Activated CD4-positive, alpha-beta T cell treated with anti-CD3 and anti-CD28 coated beads, Interleukin-2, amount 10 ng/mL, durations not matched to agents 24 days and 14 days (primary cell): ENCODE measurements at regions of chr5 and their contacts with region 1.

Region 1: GRCh38 chr5:79990598-79991507 is at the start of gene MTX3:
- DNase-seq: peak; percentile 96
- H3K4me3 Mint-ChIP-seq: peak within 1 kb of the TSS; percentile 94
- H3K27ac Mint-ChIP-seq: peak within 1 kb of the TSS; percentile 99
- H3K4me1 Mint-ChIP-seq: peaks cover 34% of the 10 kb centered on the region
- H3K27me3 Mint-ChIP-seq: peaks cover 3% of the 10 kb centered on the region
- total RNA-seq, gene MTX3: 26.8 and 27.8 TPM in 2 replicates

Region 2: GRCh38 chr5:79514391-79515105 is 476.3 kb before region 1 on chr5:
- intact Hi-C with region 1: loop called (anchors 2 kb)
- DNase-seq: peak; percentile 97
- H3K4me3 Mint-ChIP-seq: peak overlapping the region; percentile 88
- H3K27ac Mint-ChIP-seq: peak overlapping the region; percentile 97
- H3K4me1 Mint-ChIP-seq: peaks cover 32% of the 10 kb centered on the region
- H3K27me3 Mint-ChIP-seq: peaks cover 23% of the 10 kb centered on the region

Region 3: DNA sequence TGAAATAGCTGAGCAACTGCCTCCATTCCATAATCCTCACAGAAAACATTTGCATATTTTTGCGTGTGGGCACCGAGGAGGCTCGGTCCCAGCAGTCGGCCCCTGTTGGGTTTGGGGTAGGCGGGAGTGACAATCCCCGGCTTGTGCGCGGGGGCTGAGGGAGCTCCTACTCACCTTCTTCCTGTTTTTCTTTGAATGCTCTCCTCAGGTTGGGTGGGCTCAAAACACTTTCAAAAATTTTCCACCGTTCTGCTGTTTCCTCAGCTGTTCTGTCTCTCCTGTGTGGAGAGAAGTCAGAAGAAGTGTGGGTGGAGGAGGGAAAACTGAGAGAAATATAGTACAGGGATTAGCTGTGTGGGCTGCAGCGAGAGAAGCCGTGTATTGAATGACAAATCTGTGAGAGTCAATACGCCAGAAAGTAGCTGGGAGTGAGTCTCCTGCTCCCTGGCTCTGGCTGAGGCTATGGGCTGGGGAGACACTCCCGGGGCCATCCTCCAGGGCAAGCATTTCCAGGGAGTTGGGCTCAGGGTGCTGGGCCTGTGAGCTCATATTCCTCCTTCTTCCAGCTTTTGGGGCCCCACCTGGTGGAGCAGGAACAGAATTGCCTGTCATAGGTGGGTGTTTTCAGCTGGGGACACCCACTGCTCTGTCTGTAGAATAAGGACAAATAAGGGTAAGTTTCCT is 216.5 kb before region 1 on chr5:
- intact Hi-C with region 1: no loop called
- DNase-seq: no peak
- H3K4me3 Mint-ChIP-seq: no peak overlapping the region
- H3K27ac Mint-ChIP-seq: no peak overlapping the region
- H3K4me1 Mint-ChIP-seq: no peaks in the 10 kb centered on the region
- H3K27me3 Mint-ChIP-seq: peaks cover 1% of the 10 kb centered on the region

Region 4: DNA sequence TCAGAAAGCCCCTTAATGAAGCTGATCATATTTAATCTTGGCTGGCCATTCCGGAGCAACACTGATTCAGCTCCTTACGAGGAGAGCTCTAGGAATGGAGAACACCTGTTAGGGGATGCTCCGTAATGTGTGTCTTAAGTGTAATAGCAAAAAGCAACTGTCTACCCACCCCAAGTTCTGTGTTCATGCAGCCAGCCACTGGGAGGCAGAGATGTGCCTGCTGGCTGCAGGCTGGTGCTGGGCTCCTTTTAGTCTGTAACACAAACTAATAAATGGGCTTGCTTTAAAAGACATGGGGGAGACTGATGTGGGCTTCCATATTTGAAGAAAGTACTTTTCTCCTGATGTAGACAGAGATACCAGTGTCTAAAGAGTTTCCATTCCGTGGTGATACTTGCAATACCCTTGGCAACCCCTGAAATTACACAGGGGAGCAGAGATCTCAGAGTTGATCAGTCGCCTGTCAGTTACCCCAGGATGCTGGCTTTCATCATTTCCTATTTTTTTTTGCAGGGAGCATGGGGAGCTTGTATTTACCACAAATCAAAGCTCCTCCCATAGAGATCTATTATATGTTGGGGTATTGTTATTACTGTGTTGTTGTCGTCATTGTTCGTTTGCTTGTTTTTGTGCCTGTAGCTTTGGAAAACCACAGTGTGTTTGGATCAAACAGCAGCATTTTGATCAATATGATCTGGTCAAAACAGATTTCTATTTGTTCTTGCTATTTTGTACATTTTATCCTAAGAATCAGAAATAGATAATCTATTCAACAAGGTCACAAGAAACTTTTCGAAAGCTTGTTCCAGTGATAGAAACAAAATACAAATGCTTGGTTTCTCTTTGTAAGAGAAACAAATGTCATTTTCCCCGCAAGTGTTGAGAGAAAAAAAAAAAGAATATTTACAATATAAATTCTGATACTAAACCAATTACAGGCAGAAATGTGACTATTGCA is 65.6 kb before region 1 on chr5:
- intact Hi-C with region 1: loop called (anchors 5 kb)
- DNase-seq: peak; percentile 70
- H3K4me3 Mint-ChIP-seq: no peak overlapping the region
- H3K27ac Mint-ChIP-seq: no peak overlapping the region
- H3K4me1 Mint-ChIP-seq: no peaks in the 10 kb centered on the region
- H3K27me3 Mint-ChIP-seq: peaks cover 10% of the 10 kb centered on the region

Region 5: GRCh38 chr5:80033513-80033912 is 42.7 kb after region 1 on chr5:
- intact Hi-C with region 1: loop called (anchors 1 kb)
- DNase-seq: peak; percentile 78
- H3K4me3 Mint-ChIP-seq: no peak overlapping the region
- H3K27ac Mint-ChIP-seq: no peak overlapping the region
- H3K4me1 Mint-ChIP-seq: peaks cover 25% of the 10 kb centered on the region
- H3K27me3 Mint-ChIP-seq: peaks cover 52% of the 10 kb centered on the region

Region 6: GRCh38 chr5:80125962-80126480 is 135.2 kb after region 1 on chr5:
- intact Hi-C with region 1: loop called (anchors 1 kb)
- DNase-seq: peak; percentile 78
- H3K4me3 Mint-ChIP-seq: peak overlapping the region; percentile 26
- H3K27ac Mint-ChIP-seq: peak overlapping the region; percentile 70
- H3K4me1 Mint-ChIP-seq: peaks cover 28% of the 10 kb centered on the region
- H3K27me3 Mint-ChIP-seq: no peaks in the 10 kb centered on the region

Region 7: GRCh38 chr5:80255732-80256479 is 265.1 kb after region 1 on chr5 and contains the start of gene SERINC5:
- intact Hi-C with region 1: loop called (anchors 5 kb)
- DNase-seq: peak; percentile 95
- H3K4me3 Mint-ChIP-seq: peak within 1 kb of the TSS; percentile 97
- H3K27ac Mint-ChIP-seq: peak within 1 kb of the TSS; percentile 99
- H3K4me1 Mint-ChIP-seq: peaks cover 44% of the 10 kb centered on the region
- H3K27me3 Mint-ChIP-seq: no peaks in the 10 kb centered on the region
- total RNA-seq, gene SERINC5: 19.2 and 21.3 TPM in 2 replicates